CD8-positive, alpha-beta memory T cell (primary cell): ENCODE measurements at regions of chr12 and their contacts with region 1.

Region 1: GRCh38 chr12:48157018-48157888 is at the start of gene ASB8:
- DNase-seq: peak; percentile 98 to 99 (median 98)
- H3K4me3 ChIP-seq: peak within 1 kb of the TSS; percentile 96
- H3K4me3 Mint-ChIP-seq: peak within 1 kb of the TSS; percentile 95 to 99 (median 98)
- H3K27ac ChIP-seq: peak within 1 kb of the TSS; percentile 88
- H3K27ac Mint-ChIP-seq: peak within 1 kb of the TSS; percentile 91 to 99 (median 98)
- H3K4me1 ChIP-seq: peaks cover 20% of the 10 kb centered on the region
- H3K4me1 Mint-ChIP-seq: peaks cover 31 to 52% (median 41%) of the 10 kb centered on the region in 3 donors
- H3K27me3 ChIP-seq: no peaks in the 10 kb centered on the region
- H3K27me3 Mint-ChIP-seq: peaks cover 0 to 2% of the 10 kb centered on the region in 2 donors
- total RNA-seq, gene ASB8: 32.5 to 38.1 TPM

Region 2: GRCh38 chr12:48105862-48106680 is 51.2 kb before region 1 on chr12 and contains the start of gene SENP1:
- CTCF ChIA-PET with region 1: interaction called, 5 read pairs
- POLR2A ChIA-PET with region 1: interaction called, 17 read pairs
- DNase-seq: peak; percentile 79 to 92 (median 89)
- H3K4me3 ChIP-seq: peak within 1 kb of the TSS; percentile 95
- H3K4me3 Mint-ChIP-seq: peak within 1 kb of the TSS; percentile 90 to 98 (median 95)
- H3K27ac ChIP-seq: peak within 1 kb of the TSS; percentile 95
- H3K27ac Mint-ChIP-seq: peak within 1 kb of the TSS; percentile 94 to 100 (median 99)
- H3K4me1 ChIP-seq: peaks cover 25% of the 10 kb centered on the region
- H3K4me1 Mint-ChIP-seq: peaks cover 40 to 62% (median 51%) of the 10 kb centered on the region in 3 donors
- H3K27me3 ChIP-seq: no peaks in the 10 kb centered on the region
- H3K27me3 Mint-ChIP-seq: no peaks in the 10 kb centered on the region
- total RNA-seq, gene SENP1: 57.3 to 58.8 TPM

Region 3: DNA sequence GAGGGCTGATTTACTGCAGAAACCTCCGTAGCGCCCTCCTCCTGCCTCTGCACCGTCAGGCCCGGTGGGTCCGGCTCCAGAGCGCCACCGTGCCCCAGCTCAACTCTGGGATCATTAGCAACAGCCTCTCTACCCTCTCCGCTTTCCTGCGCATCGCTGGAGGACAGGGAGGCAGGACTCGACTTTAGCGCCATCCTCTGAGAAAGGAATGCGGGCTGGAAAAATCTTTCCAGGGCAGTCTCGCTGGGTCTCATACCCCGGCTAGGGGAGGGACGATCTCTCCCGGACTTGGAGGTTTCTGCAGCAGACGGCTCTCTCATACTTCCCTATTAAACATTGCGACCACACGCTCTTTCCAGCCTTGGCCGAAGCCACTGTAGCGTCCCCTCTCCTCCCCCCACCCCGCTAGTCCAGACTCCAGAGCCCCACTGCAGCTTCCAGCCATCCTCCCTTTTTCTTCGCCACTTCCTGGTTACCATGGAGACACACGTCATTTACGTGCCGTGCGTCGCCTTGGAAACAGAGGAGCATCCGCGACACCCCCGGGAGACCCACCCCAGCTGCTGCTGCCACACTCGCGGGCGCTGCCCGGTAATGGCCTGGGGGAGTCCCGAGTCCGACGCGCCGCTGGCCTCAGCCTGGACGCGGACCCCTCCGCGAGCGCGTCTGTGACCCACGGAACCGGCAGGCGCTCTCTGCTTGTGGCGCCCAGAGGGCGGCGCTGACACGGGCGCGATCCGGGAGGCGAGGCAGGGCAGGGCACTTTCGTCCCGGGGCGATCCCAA is 26.0 kb after region 1 on chr12 and contains the start of gene CCDC184:
- CTCF ChIA-PET with region 1: interaction called, 9 read pairs
- POLR2A ChIA-PET with region 1: interaction called, 13 read pairs
- DNase-seq: peak; percentile 57 to 91 (median 84)
- H3K4me3 ChIP-seq: peak within 1 kb of the TSS; percentile 91
- H3K4me3 Mint-ChIP-seq: peak within 1 kb of the TSS; percentile 93 to 97 (median 96)
- H3K27ac ChIP-seq: peak within 1 kb of the TSS; percentile 75
- H3K27ac Mint-ChIP-seq: peak within 1 kb of the TSS; percentile 71 to 96 (median 90)
- H3K4me1 ChIP-seq: peaks cover 16% of the 10 kb centered on the region
- H3K4me1 Mint-ChIP-seq: peaks cover 6 to 20% (median 11%) of the 10 kb centered on the region in 3 donors
- H3K27me3 ChIP-seq: peaks cover 12% of the 10 kb centered on the region
- H3K27me3 Mint-ChIP-seq: peaks cover 22 to 29% of the 10 kb centered on the region in 2 donors
- total RNA-seq, gene CCDC184: 0.72 to 0.97 TPM

Region 4: GRCh38 chr12:48197971-48198671 is 40.9 kb after region 1 on chr12:
- CTCF ChIA-PET with region 1: interaction called, 11 read pairs
- POLR2A ChIA-PET with region 1: interaction called, 14 read pairs
- DNase-seq: peak; percentile 78 to 93 (median 85)
- H3K4me3 ChIP-seq: peak overlapping the region; percentile 94
- H3K4me3 Mint-ChIP-seq: peak overlapping the region; percentile 87 to 93 (median 89)
- H3K27ac ChIP-seq: peak overlapping the region; percentile 99
- H3K27ac Mint-ChIP-seq: peak overlapping the region; percentile 85 to 100 (median 96)
- H3K4me1 ChIP-seq: peaks cover 34% of the 10 kb centered on the region
- H3K4me1 Mint-ChIP-seq: peaks cover 45 to 65% (median 60%) of the 10 kb centered on the region in 3 donors
- H3K27me3 ChIP-seq: no peaks in the 10 kb centered on the region
- H3K27me3 Mint-ChIP-seq: peaks cover 6 to 18% of the 10 kb centered on the region in 2 donors